Spleen (tissue), 13 donors: ENCODE measurements at regions of chr10 and their contacts with region 1.

Region 1: GRCh38 chr10:7525314-7526016 is 114.6 kb upstream of the SFMBT2 start:
- DNase-seq: no peak
- H3K4me3 ChIP-seq: no peak overlapping the region
- H3K27ac ChIP-seq: no peak overlapping the region
- H3K4me1 ChIP-seq: peaks cover 0 to 11% (median 0%) of the 10 kb centered on the region in 6 donors
- H3K27me3 ChIP-seq: peaks cover 0 to 49% (median 8%) of the 10 kb centered on the region in 7 donors
- CTCF ChIP-seq: peak; percentile 53 to 92 (median 78)
- POLR2A ChIP-seq: no peak

Region 2: GRCh38 chr10:7199152-7199760 is 326.2 kb before region 1 on chr10:
- intact Hi-C with region 1: no loop called
- DNase-seq: no peak
- H3K4me3 ChIP-seq: no peak overlapping the region
- H3K27ac ChIP-seq: peak overlapping the region in 1 of 8 donors; percentile 0
- H3K4me1 ChIP-seq: peaks cover 0 to 19% (median 2%) of the 10 kb centered on the region in 6 donors
- H3K27me3 ChIP-seq: no peaks in the 10 kb centered on the region
- CTCF ChIP-seq: no peak
- POLR2A ChIP-seq: no peak

Region 3: DNA sequence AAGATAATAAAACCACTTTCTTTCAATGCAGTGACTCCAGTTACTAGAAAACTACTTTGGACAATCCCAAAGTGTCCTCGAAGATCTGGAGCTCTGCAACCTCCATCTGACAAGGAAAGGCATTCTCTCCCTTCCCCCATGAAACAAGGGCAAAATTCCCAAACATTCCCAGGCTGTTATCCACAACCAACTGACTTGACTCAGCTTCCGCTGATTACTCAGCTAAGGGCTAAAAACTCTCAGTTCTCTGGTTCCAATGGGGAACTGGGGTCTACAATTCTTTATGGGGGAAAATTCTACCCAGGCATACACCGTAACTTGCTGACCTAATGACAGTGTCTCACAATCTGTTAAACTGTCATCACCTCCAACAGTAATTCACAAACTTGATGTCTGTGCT is 163.0 kb before region 1 on chr10:
- intact Hi-C with region 1: no loop called
- DNase-seq: no peak
- H3K4me3 ChIP-seq: no peak overlapping the region
- H3K27ac ChIP-seq: no peak overlapping the region
- H3K4me1 ChIP-seq: peaks cover 0 to 16% (median 0%) of the 10 kb centered on the region in 6 donors
- H3K27me3 ChIP-seq: no peaks in the 10 kb centered on the region
- CTCF ChIP-seq: no peak
- POLR2A ChIP-seq: no peak

Region 4: GRCh38 chr10:7687228-7687907 is 161.9 kb after region 1 on chr10:
- intact Hi-C with region 1: loop called (anchors 1 kb)
- DNase-seq: peak; percentile 88
- H3K4me3 ChIP-seq: no peak overlapping the region
- H3K27ac ChIP-seq: no peak overlapping the region
- H3K4me1 ChIP-seq: peaks cover 0 to 7% (median 0%) of the 10 kb centered on the region in 6 donors
- H3K27me3 ChIP-seq: no peaks in the 10 kb centered on the region
- CTCF ChIP-seq: peak; percentile 67 to 93 (median 81)
- POLR2A ChIP-seq: no peak

Region 5: DNA sequence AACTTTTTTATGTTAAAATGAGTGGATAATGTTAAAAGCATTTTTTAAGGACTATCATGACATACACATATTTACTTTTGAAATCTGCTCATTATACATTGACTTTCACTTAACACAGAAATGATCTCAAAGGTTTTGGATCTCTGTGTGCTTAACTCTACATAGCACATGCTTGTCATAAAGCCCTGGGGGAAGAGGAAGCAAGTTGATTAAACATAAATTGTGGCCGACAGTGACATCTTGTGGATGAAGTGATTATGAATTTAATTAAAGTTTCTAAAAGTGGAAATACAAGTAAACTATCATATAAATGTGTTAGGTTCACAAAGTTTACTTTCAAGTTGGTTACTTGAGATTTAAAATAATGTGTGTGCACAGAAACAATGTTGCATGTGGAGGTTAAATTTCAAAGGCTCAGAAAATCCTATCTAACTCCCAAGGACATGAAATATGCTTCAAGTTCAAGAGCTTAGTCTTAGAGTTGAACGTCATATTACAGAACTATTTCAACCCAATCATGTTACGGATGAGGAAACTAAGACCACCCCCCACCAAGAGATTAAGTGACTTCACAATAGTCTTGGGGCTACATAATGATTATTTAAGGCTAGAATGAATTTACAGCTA is 1776.8 kb after region 1 on chr10:
- intact Hi-C with region 1: loop called (anchors 10 kb)
- DNase-seq: no peak
- H3K4me3 ChIP-seq: no peak overlapping the region
- H3K27ac ChIP-seq: no peak overlapping the region
- H3K4me1 ChIP-seq: no peaks in the 10 kb centered on the region
- H3K27me3 ChIP-seq: peaks cover 0 to 3% (median 0%) of the 10 kb centered on the region in 7 donors
- CTCF ChIP-seq: peak in 5 of 11 experiments; percentile 19 to 37 (median 28)
- POLR2A ChIP-seq: no peak